ENCODE measurements at regions of chr3 and their contacts with region 1.

Region 1: DNA sequence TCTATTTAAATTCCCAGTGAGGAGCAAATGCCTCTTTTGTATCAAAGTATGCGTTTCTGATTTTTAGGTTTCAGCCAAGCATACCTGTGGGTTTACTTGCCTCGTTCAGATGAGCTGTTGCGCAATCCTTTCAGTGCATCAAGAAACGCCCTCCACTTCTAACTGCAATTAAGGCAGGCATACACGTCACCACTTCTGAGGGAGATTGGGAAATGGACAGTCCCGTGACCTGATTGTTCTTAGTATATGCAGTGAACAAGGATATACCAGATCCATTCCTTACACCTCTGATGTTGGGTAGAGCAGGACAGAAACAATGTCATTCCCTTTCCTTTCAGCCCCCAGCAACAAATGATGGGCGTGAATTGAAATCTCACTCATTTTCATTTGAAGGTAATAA is 219.0 kb downstream of the ITPR1 start:
- DNase-seq: no peak
- ATAC-seq: no peak
- H3K4me3 Mint-ChIP-seq: no peak overlapping the region
- H3K27ac Mint-ChIP-seq: no peak overlapping the region
- H3K4me1 Mint-ChIP-seq: peaks cover 11% of the 10 kb centered on the region
- H3K27me3 Mint-ChIP-seq: no peaks in the 10 kb centered on the region
- CTCF ChIP-seq: no peak

Region 2: GRCh38 chr3:4356546-4357410 is 355.4 kb before region 1 on chr3:
- CTCF ChIA-PET with region 1: no interaction called
- POLR2A ChIA-PET with region 1: no interaction called
- intact Hi-C with region 1: no loop called
- DNase-seq: no peak
- ATAC-seq: no peak
- H3K4me3 Mint-ChIP-seq: no peak overlapping the region
- H3K27ac Mint-ChIP-seq: no peak overlapping the region
- H3K4me1 Mint-ChIP-seq: peaks cover 7% of the 10 kb centered on the region
- H3K27me3 Mint-ChIP-seq: no peaks in the 10 kb centered on the region
- CTCF ChIP-seq: no peak

Region 3: GRCh38 chr3:4449043-4449805 is 262.9 kb before region 1 on chr3:
- CTCF ChIA-PET with region 1: no interaction called
- POLR2A ChIA-PET with region 1: no interaction called
- intact Hi-C with region 1: no loop called
- DNase-seq: no peak
- ATAC-seq: no peak
- H3K4me3 Mint-ChIP-seq: no peak overlapping the region
- H3K27ac Mint-ChIP-seq: no peak overlapping the region
- H3K4me1 Mint-ChIP-seq: peaks cover 4% of the 10 kb centered on the region
- H3K27me3 Mint-ChIP-seq: no peaks in the 10 kb centered on the region
- CTCF ChIP-seq: no peak

Region 4: GRCh38 chr3:4736284-4736861 is 24.2 kb after region 1 on chr3:
- CTCF ChIA-PET with region 1: interaction called, 21 read pairs
- POLR2A ChIA-PET with region 1: no interaction called
- intact Hi-C with region 1: no loop called
- DNase-seq: no peak
- ATAC-seq: no peak
- H3K4me3 Mint-ChIP-seq: no peak overlapping the region
- H3K27ac Mint-ChIP-seq: peak overlapping the region; percentile 91
- H3K4me1 Mint-ChIP-seq: peaks cover 77% of the 10 kb centered on the region
- H3K27me3 Mint-ChIP-seq: no peaks in the 10 kb centered on the region
- CTCF ChIP-seq: no peak

Region 5: DNA sequence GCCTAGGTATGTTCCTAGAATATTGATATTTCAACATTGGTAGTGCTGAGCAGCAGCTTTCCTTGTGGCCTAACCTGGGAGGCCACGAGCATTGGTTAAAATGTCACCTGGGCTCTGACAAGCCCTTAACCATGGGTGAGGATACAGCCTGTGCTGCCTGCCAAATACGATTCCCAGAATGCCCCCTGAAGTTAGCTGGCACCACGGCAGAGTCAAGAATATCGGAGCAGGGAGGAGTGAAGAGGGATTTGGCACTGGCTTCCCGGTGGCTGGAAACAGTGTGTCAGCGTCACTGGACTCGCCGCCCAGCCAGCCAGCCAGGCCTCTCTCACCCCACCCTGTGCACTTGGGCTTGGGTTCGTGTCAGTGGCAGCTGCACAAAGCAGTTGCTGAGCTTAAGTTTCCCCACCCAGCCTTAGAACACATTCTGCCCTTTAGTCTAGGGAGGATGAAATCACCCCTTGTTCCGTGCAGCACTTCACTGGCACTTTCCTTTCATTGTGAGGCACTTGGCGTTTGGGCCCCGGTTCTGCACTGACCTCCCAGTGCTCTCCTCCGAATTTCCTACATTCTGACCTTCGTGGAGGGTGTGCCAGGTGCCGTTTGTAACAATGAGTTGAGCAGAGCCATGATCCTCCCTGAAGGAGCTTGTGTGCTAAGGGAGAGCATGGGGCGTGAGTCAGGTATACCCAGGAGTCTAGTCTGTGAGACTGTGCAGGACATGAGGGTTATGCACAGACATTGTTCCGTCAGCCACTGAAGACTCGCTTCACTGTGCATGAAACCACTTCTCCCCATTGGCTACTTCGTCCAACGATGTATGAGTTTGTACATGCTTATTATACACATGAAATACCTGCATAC is 114.3 kb after region 1 on chr3:
- CTCF ChIA-PET with region 1: interaction called, 26 read pairs
- POLR2A ChIA-PET with region 1: interaction called, 5 read pairs
- intact Hi-C with region 1: no loop called
- DNase-seq: no peak
- ATAC-seq: no peak
- H3K4me3 Mint-ChIP-seq: peak overlapping the region; percentile 68
- H3K27ac Mint-ChIP-seq: peak overlapping the region; percentile 100
- H3K4me1 Mint-ChIP-seq: peaks cover 95% of the 10 kb centered on the region
- H3K27me3 Mint-ChIP-seq: no peaks in the 10 kb centered on the region
- CTCF ChIP-seq: no peak

Region 6: DNA sequence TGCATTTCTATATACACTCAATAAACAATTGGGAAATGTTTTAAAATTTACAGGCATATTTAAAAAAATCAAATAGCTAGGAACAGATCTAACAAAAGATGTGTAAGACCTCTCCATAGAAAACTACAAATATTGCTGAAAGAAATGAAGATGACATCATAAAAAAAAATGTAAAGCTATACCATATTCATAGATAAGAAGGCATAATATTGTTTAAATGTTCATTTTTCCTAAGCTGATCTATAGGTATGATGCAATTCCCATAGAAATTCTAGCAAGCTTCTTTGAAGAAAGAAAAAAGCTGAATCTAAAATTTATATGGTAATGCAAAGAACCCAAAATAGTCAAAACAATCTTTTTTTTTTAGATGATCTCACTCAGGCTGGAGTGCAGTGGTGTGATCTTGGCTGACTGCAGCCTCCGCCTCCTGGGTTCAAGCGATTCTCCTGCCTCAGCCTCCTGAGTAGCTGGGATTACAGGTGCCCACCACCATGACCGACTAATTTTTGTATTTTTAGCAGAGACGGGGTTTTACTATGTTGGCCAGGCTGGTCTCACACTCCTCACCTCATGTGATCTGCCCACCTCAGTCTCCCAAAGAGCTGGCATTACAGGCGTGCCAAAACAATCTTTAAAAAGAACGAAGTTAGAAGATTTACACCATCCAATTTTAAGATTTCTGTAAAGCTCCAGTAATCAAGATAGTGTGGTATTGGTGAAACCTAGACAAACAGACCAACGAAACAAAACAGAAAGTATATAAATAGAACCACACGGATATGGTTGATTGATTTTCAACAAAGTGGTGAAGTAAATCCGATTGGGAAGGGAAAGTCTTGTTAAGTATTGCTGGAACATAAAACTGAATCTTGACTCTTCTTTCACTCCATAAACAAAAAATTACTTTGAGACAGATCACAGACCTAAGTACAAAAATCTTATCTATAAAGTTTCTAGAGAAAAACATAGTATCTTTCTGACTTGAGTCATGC is 260.8 kb after region 1 on chr3:
- CTCF ChIA-PET with region 1: interaction called, 148 read pairs
- POLR2A ChIA-PET with region 1: interaction called, 8 read pairs
- intact Hi-C with region 1: no loop called
- DNase-seq: no peak
- ATAC-seq: no peak
- H3K4me3 Mint-ChIP-seq: no peak overlapping the region
- H3K27ac Mint-ChIP-seq: no peak overlapping the region
- H3K4me1 Mint-ChIP-seq: peaks cover 30% of the 10 kb centered on the region
- H3K27me3 Mint-ChIP-seq: no peaks in the 10 kb centered on the region
- CTCF ChIP-seq: no peak

Region 7: DNA sequence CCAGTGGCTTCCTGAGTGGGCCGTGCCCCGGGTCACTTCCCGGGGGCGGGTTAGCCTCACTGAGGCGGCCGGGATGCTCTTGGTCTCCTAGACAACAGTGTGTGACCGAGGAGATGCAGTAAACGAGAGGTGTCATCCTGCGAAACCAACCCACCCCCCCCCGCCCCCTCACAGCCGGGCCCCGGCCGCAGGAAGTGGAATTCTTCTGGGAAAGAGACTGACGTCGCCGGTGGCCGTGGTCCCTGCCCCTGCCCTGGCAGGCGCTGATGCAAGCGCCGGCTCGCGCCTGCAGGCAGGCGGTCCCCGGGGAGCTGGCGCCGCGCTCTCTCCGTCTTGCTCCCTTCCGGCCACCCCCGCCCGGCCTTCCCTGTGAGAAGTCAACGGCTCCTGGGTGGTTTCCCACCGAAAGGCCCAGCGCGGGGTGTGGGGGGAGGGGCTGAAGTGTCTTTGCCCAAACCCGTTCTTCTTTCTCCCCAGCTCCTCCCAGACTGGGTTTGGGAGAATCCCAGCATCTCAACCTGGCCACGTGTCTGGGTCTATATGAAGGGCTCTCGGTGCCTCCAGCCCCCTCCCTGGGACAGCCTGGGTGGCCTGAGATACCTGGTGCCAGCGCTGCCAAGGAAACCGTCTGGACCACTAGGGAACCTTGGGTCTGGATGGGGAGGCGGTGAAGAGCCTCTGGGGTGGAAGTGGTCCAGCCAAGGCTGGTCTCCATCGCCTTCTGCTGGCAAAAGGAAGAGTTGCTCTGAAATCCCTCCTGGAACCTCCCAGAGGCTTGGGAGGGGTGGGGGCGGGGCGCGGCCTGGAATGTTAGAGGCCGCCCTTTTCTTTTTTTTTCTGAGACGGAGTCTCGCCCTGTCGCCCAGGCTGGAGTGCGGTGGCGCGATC is 314.4 kb after region 1 on chr3:
- CTCF ChIA-PET with region 1: interaction called, 27 read pairs
- POLR2A ChIA-PET with region 1: interaction called, 3 read pairs
- intact Hi-C with region 1: no loop called
- DNase-seq: peak; percentile 83
- ATAC-seq: peak; percentile 60
- H3K4me3 Mint-ChIP-seq: peak overlapping the region; percentile 67
- H3K27ac Mint-ChIP-seq: peak overlapping the region; percentile 86
- H3K4me1 Mint-ChIP-seq: peaks cover 53% of the 10 kb centered on the region
- H3K27me3 Mint-ChIP-seq: peaks cover 9% of the 10 kb centered on the region
- CTCF ChIP-seq: peak; percentile 39